PC-9 (cell line): ENCODE measurements at regions of chr1 and their contacts with region 1.

Region 1: GRCh38 chr1:161045750-161046571 is at the start of gene USF1:
- DNase-seq: peak; percentile 89 to 90
- H3K4me3 ChIP-seq: peak within 1 kb of the TSS; percentile 66
- H3K27ac ChIP-seq: peak within 1 kb of the TSS; percentile 85
- H3K4me1 ChIP-seq: peaks cover 15% of the 10 kb centered on the region
- H3K27me3 ChIP-seq: no peaks in the 10 kb centered on the region
- CTCF ChIP-seq: 0 out of 2 replicates have a peak, but pooled peaks have one; percentile 19
- total RNA-seq, gene USF1: 34.8 and 43.2 TPM in 2 replicates

Region 2: GRCh38 chr1:161088636-161089035 is 42.7 kb after region 1 on chr1:
- CTCF ChIA-PET with region 1: interaction called, 13 read pairs
- POLR2A ChIA-PET with region 1: interaction called, 5 read pairs
- intact Hi-C with region 1: loop called (anchors 2 kb)
- DNase-seq: peak; percentile 47 to 75
- H3K4me3 ChIP-seq: peak overlapping the region; percentile 61
- H3K27ac ChIP-seq: peak overlapping the region; percentile 86
- H3K4me1 ChIP-seq: peaks cover 96% of the 10 kb centered on the region
- H3K27me3 ChIP-seq: no peaks in the 10 kb centered on the region
- CTCF ChIP-seq: no peak